GM12878 (cell line): ENCODE measurements at regions of chr4 and their contacts with region 1.

Region 1: GRCh38 chr4:113394730-113395530 is 345.5 kb downstream of the ANK2 start:
- DNase-seq: peak; percentile 66
- ATAC-seq: peak; percentile 99
- H3K4me3 ChIP-seq: no peak overlapping the region
- H3K27ac ChIP-seq: no peak overlapping the region
- H3K4me1 ChIP-seq: no peaks in the 10 kb centered on the region
- H3K27me3 ChIP-seq: no peaks in the 10 kb centered on the region
- CTCF ChIP-seq: peak; percentile 62 to 94 (median 70); a peak in 5 of 6 replicates
- EP300 ChIP-seq: no peak
- POLR2A ChIP-seq: no peak
- RAD21 ChIP-seq: peak; percentile 98

Region 2: DNA sequence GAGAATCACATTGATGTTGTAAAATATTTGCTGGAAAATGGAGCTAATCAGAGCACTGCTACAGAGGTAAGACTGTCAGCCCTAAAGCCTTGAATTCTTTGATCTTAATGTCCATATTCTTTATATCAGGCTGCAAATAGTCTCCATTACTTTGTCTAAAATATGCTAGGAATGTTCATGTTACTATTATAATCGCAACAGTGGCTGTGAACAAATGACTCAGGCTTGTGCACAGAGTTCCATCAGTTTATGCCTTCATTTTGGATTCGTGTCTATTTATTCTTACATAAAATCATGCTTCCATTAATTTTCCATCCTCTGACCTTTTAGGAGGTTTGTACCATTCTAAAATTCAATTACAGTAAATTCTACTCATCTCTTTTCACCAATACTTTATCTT is 162.7 kb before region 1 on chr4:
- CTCF ChIA-PET with region 1: no interaction called
- POLR2A ChIA-PET with region 1: no interaction called
- RAD21 ChIA-PET with region 1: no interaction called
- SMC1A ChIA-PET with region 1: no interaction called
- in situ Hi-C with region 1: no loop called
- intact Hi-C with region 1: no loop called
- DNase-seq: no peak
- ATAC-seq: no peak
- H3K4me3 ChIP-seq: no peak overlapping the region
- H3K27ac ChIP-seq: no peak overlapping the region
- H3K4me1 ChIP-seq: no peaks in the 10 kb centered on the region
- H3K27me3 ChIP-seq: no peaks in the 10 kb centered on the region
- CTCF ChIP-seq: no peak
- EP300 ChIP-seq: no peak
- POLR2A ChIP-seq: no peak
- RAD21 ChIP-seq: no peak

Region 3: DNA sequence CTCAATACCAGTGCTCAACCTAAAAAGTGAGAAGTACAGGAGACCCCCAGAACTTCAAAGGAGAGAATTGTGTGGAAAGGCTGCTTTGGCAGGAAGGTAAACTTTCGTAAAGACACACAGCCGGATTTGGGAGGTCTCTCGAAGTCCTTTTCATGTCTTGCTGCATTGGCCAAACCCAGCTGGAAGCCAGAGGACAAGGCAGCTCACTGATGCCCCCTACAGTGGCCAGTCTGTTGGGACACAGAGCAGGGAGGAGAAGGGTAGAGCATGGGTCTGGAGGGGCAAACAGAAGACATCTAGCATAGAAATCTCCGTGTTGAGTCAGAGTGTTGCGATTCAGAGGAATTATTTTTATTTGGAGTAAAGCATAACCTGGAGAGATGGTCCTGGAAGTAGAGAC is 146.6 kb before region 1 on chr4:
- CTCF ChIA-PET with region 1: no interaction called
- POLR2A ChIA-PET with region 1: no interaction called
- RAD21 ChIA-PET with region 1: no interaction called
- SMC1A ChIA-PET with region 1: no interaction called
- in situ Hi-C with region 1: no loop called
- intact Hi-C with region 1: no loop called
- DNase-seq: no peak
- ATAC-seq: peak; percentile 61; the same call in 2 of the 3 replicates
- H3K4me3 ChIP-seq: no peak overlapping the region
- H3K27ac ChIP-seq: no peak overlapping the region
- H3K4me1 ChIP-seq: no peaks in the 10 kb centered on the region
- H3K27me3 ChIP-seq: no peaks in the 10 kb centered on the region
- CTCF ChIP-seq: peak in 2 of 3 experiments; percentile 19 to 25; a peak in 2 of 6 replicates
- EP300 ChIP-seq: no peak
- POLR2A ChIP-seq: no peak
- RAD21 ChIP-seq: 0 out of 2 replicates have a peak, but pooled peaks have one; percentile 9

Region 4: DNA sequence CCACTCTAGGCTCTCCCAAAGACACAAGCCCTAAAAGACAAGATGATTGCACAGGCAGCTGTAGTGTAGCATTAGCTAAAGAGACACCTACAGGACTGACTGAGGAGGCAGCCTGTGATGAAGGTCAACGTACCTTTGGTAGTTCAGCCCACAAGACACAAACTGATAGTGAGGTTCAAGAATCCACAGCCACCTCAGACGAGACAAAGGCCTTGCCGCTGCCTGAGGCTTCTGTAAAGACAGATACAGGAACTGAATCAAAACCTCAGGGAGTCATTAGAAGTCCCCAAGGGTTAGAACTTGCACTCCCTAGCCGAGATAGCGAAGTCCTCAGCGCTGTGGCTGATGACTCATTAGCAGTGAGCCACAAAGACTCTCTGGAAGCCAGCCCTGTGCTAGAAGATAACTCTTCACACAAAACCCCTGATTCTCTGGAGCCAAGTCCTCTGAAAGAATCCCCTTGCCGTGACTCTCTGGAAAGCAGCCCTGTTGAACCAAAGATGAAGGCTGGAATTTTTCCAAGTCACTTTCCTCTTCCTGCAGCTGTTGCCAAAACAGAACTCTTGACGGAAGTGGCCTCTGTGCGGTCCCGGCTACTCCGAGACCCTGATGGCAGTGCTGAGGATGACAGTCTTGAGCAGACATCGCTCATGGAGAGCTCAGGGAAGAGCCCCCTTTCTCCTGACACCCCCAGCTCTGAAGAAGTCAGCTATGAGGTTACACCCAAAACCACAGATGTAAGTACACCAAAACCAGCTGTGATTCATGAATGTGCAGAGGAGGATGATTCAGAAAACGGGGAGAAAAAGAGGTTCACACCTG is 39.2 kb before region 1 on chr4:
- CTCF ChIA-PET with region 1: interaction called, 7 read pairs
- POLR2A ChIA-PET with region 1: no interaction called
- RAD21 ChIA-PET with region 1: interaction called, 4 read pairs
- SMC1A ChIA-PET with region 1: interaction called, 12 read pairs
- in situ Hi-C with region 1: no loop called
- intact Hi-C with region 1: no loop called
- DNase-seq: peak; percentile 98
- ATAC-seq: peak; percentile 98
- H3K4me3 ChIP-seq: peak overlapping the region; percentile 8; the same call in 1 of the 2 replicates
- H3K27ac ChIP-seq: peak overlapping the region; percentile 64
- H3K4me1 ChIP-seq: peaks cover 14% of the 10 kb centered on the region
- H3K27me3 ChIP-seq: no peaks in the 10 kb centered on the region
- CTCF ChIP-seq: peak; percentile 43 to 65 (median 45); a peak in 5 of 6 replicates
- EP300 ChIP-seq: peak; percentile 70 to 79
- POLR2A ChIP-seq: no peak
- RAD21 ChIP-seq: peak; percentile 36; the same call in 1 of the 2 replicates

Region 5: DNA sequence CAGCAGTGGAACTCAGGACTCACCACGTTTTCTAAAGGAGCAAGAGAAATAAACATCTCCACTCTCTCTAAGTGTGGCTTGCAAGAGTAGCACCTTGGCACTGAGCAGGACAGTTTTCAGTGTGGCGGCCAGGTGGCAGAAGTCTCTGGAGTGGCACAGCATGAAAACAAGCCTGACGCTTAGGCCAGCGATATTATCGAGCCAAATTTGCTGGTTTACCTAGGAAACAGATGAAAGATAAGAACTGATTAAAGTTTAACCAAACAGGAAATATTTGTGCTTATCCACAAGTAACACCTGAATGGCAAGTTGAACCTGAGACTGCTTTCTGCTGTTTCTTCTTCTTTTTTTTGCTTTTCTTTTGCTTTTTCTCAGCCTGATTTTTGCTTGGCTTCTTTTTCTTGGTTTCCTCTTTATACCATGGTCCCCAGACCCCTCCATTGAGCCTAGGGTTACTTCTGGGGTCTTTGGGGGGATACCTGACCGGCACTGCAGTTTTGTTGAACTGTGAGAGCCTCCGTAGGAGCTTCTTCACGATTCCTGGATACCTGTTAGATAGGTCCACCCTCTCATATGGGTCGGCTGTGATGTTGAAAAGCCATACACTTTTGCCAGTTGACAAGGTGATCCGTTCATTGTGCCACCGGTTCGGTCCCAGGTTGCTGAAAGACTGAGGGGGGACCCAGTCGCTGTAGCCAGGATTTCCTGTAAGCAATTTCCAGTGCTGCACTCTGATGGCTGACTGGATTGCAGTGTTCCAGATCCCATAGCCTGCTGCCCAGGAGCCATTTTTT is 507.3 kb after region 1 on chr4:
- CTCF ChIA-PET with region 1: no interaction called
- POLR2A ChIA-PET with region 1: no interaction called
- RAD21 ChIA-PET with region 1: interaction called, 5 read pairs
- SMC1A ChIA-PET with region 1: interaction called, 3 read pairs
- in situ Hi-C with region 1: no loop called
- intact Hi-C with region 1: loop called (anchors 10 kb)
- DNase-seq: no peak
- ATAC-seq: no peak
- H3K4me3 ChIP-seq: no peak overlapping the region
- H3K27ac ChIP-seq: no peak overlapping the region
- H3K4me1 ChIP-seq: peaks cover 11% of the 10 kb centered on the region
- H3K27me3 ChIP-seq: no peaks in the 10 kb centered on the region
- CTCF ChIP-seq: peak in 1 of 3 experiments; percentile 24; a peak in 1 of 6 replicates
- EP300 ChIP-seq: no peak
- POLR2A ChIP-seq: no peak
- RAD21 ChIP-seq: no peak; the same call in 1 of the 2 replicates

Region 6: DNA sequence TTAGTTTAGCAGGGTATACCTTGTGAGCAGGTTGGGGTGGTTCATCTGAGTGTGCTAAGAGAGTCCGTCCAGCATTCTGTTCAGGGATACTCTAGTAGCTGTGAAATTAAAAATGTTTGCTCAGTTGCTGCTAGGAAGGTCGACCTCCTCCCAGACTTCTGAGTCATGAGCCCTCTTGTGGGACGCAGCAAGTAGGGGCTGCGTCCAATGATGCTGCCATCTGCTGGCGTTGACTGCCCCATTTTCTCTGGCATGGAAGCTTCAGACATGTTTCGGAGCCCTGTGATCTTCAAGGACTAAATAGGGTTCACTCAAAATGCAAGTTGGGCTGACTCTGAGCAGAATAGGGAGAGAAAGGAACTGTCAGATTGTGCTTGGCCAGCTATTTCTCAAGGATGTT is 785.6 kb after region 1 on chr4:
- CTCF ChIA-PET with region 1: interaction called, 9 read pairs
- POLR2A ChIA-PET with region 1: no interaction called
- RAD21 ChIA-PET with region 1: interaction called, 5 read pairs
- SMC1A ChIA-PET with region 1: interaction called, 8 read pairs
- in situ Hi-C with region 1: no loop called
- intact Hi-C with region 1: loop called (anchors 1 kb)
- DNase-seq: no peak
- ATAC-seq: peak; percentile 80
- H3K4me3 ChIP-seq: no peak overlapping the region
- H3K27ac ChIP-seq: no peak overlapping the region
- H3K4me1 ChIP-seq: no peaks in the 10 kb centered on the region
- H3K27me3 ChIP-seq: no peaks in the 10 kb centered on the region
- CTCF ChIP-seq: peak; percentile 51 to 61 (median 60)
- EP300 ChIP-seq: no peak
- POLR2A ChIP-seq: no peak
- RAD21 ChIP-seq: 0 out of 2 replicates have a peak, but pooled peaks have one; percentile 24

Region 7: GRCh38 chr4:114659386-114660008 is 1264.6 kb after region 1 on chr4:
- CTCF ChIA-PET with region 1: interaction called, 4 read pairs
- POLR2A ChIA-PET with region 1: no interaction called
- RAD21 ChIA-PET with region 1: no interaction called
- SMC1A ChIA-PET with region 1: no interaction called
- in situ Hi-C with region 1: no loop called
- intact Hi-C with region 1: loop called (anchors 2 kb)
- DNase-seq: peak; percentile 32
- ATAC-seq: peak; percentile 99
- H3K4me3 ChIP-seq: no peak overlapping the region
- H3K27ac ChIP-seq: no peak overlapping the region
- H3K4me1 ChIP-seq: no peaks in the 10 kb centered on the region
- H3K27me3 ChIP-seq: no peaks in the 10 kb centered on the region
- CTCF ChIP-seq: peak; percentile 78 to 88 (median 84)
- EP300 ChIP-seq: no peak
- POLR2A ChIP-seq: no peak
- RAD21 ChIP-seq: peak; percentile 94

Region 8: DNA sequence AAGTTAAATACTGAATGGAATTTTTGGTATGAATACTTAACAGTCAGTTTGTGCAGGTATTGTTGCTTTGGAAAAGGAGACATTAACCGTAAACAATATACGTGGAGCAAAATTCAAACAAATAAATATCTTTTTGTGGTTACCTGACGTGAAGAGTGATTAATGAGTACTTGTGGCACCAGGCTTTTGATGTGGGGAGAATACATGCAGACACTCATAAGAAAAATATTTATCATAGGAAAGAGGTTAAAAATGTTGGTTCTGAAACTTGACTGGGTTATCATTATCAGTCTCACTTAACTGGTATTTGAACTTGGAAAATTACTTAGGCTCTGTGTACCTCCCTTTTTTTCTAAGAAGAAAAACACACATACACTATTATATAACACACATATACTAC is 1854.9 kb after region 1 on chr4:
- CTCF ChIA-PET with region 1: no interaction called
- POLR2A ChIA-PET with region 1: no interaction called
- RAD21 ChIA-PET with region 1: no interaction called
- SMC1A ChIA-PET with region 1: no interaction called
- in situ Hi-C with region 1: no loop called
- intact Hi-C with region 1: no loop called
- DNase-seq: no peak
- ATAC-seq: no peak
- H3K4me3 ChIP-seq: no peak overlapping the region
- H3K27ac ChIP-seq: no peak overlapping the region
- H3K4me1 ChIP-seq: no peaks in the 10 kb centered on the region
- H3K27me3 ChIP-seq: no peaks in the 10 kb centered on the region
- CTCF ChIP-seq: no peak
- EP300 ChIP-seq: no peak
- POLR2A ChIP-seq: no peak
- RAD21 ChIP-seq: no peak